ENCODE measurements at regions of chr2 and their contacts with region 1.

Region 1: DNA sequence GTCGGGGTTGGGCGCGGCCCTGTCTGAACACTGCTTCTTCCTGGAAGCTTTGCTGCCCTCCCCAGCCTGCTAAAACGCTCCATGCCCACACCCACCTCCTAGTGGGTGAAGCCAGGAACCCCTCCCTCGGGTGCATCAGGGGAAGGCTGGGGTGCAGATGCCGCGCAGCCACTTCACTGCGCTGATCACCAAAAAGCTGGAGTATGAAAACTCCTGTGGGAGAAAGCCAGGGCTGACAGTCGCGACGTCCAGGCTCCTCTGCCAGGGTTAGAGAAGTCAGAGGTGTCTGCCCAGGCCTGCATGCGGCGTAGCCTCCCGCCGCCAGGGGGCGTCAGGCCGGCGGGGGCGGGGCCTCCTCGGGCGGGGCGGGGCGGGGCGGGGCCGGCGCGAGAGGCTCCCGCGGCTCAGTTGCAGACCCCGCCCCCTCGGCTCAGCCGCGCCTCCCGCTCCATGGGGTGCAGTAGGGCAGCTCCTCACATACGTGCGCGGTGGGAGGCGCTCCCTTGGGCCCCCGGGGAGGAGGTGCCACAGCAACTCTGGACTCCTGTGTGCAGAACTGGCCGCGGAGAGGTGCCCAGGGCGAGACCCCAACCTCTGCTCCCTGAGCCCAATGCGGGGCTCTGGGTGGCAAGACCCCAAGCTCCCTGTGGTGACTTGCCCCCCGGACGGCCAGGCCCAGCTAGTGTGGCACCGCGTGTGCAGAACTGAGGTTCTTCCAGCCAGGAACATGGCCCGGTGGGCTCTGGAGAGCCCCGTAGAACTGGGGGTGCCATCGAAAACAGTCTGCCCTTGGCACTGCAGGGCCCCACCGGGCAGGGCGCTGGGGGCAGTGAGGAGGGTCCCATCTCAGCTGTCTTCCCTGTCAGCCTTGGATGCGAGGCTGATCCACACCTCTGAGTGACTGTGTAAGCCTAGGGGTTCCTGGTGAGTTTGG is 1.8 kb upstream of the RNPEPL1 start:
- DNase-seq: peak; percentile 98
- ATAC-seq: peak; percentile 73
- H3K4me3 Mint-ChIP-seq: peak overlapping the region; percentile 98
- H3K27ac Mint-ChIP-seq: peak overlapping the region; percentile 99
- H3K4me1 Mint-ChIP-seq: peaks cover 60% of the 10 kb centered on the region
- H3K27me3 Mint-ChIP-seq: no peaks in the 10 kb centered on the region
- CTCF ChIP-seq: peak; percentile 99

Region 2: GRCh38 chr2:240513549-240514287 is 52.8 kb before region 1 on chr2:
- CTCF ChIA-PET with region 1: interaction called, 37 read pairs
- POLR2A ChIA-PET with region 1: interaction called, 4 read pairs
- intact Hi-C with region 1: loop called (anchors 5 kb)
- DNase-seq: peak; percentile 95
- ATAC-seq: peak; percentile 100
- H3K4me3 Mint-ChIP-seq: no peak overlapping the region
- H3K27ac Mint-ChIP-seq: peak overlapping the region; percentile 47
- H3K4me1 Mint-ChIP-seq: peaks cover 13% of the 10 kb centered on the region
- H3K27me3 Mint-ChIP-seq: no peaks in the 10 kb centered on the region
- CTCF ChIP-seq: peak; percentile 93

Region 3: DNA sequence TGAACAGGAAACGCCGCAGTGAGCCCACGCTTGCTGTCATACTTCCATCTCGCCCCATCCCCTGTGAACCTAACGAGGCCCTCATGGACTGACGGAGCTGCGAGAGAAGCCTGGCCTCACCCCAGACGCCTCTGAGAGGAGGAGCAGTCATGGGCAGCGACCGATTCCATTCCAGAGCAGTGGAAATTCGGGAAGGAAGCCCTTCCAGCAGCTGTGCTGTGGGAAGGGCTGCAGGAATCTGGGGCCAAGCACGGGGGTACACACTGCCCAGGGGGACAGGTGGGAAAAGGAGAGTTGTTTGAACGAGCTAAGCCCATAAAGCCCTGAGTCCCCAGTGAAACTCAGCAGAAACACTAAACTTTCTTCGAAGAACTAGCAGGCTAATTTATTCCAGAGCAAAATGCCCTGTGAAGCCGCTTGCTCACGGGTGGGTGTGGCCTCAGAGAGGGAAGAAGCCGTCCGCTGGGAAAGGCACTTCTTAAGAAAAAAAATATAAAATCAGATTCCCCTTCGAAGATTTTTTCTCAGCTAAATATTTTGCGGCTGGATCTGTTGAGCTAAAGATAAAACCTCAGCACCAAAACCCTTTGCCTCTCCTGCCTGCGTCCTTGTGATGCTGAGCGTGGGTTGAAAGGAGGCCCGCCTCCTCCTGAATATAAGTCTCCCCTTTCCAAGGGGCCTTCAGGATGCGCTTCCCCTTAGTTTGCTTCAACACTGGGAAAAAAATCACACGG is 46.9 kb before region 1 on chr2:
- CTCF ChIA-PET with region 1: interaction called, 37 read pairs
- POLR2A ChIA-PET with region 1: no interaction called
- intact Hi-C with region 1: loop called (anchors 5 kb)
- DNase-seq: no peak
- ATAC-seq: no peak
- H3K4me3 Mint-ChIP-seq: no peak overlapping the region
- H3K27ac Mint-ChIP-seq: no peak overlapping the region
- H3K4me1 Mint-ChIP-seq: peaks cover 5% of the 10 kb centered on the region
- H3K27me3 Mint-ChIP-seq: peaks cover 3% of the 10 kb centered on the region
- CTCF ChIP-seq: no peak

Region 4: DNA sequence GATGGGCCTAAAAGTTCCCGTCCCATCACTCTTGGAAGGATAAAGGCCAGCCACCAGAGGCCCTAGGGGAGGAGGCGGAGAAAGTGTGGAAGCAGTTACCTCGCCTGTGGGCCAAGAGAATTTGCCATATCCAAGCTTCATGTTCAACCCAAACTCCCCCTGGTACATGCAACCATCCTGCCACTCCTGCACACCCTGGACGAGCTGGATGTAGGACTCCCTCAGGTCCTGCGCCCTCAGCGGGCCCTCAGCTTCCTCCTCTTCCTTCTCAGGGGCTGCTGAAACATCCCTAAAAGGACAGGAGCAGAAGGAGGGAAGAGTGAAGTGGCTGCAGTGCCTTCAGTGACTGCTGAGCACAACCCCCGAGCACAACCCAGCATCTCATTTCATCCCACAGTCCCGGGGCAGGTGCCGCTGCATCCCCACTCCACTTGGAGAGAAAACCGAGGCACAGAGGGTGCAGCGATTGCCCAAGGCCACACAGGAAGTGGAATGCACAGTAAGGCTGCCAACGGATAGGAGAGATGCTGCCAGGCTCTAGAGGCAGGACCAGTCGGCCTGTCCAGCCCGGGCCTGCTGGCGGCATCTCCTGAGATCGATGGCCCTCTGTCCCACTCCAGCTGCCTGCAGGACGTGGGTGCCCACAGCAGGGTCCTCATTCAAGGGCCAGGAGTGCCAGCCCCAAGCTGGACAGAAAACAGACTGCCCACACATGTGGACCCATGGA is 11.5 kb before region 1 on chr2:
- CTCF ChIA-PET with region 1: interaction called, 15 read pairs
- POLR2A ChIA-PET with region 1: no interaction called
- intact Hi-C with region 1: no loop called
- DNase-seq: no peak
- ATAC-seq: no peak
- H3K4me3 Mint-ChIP-seq: no peak overlapping the region
- H3K27ac Mint-ChIP-seq: no peak overlapping the region
- H3K4me1 Mint-ChIP-seq: peaks cover 37% of the 10 kb centered on the region
- H3K27me3 Mint-ChIP-seq: no peaks in the 10 kb centered on the region
- CTCF ChIP-seq: no peak

Region 5: GRCh38 chr2:240579771-240580614 is 13.5 kb after region 1 on chr2:
- CTCF ChIA-PET with region 1: interaction called, 50 read pairs
- POLR2A ChIA-PET with region 1: interaction called, 118 read pairs
- intact Hi-C with region 1: no loop called
- DNase-seq: peak; percentile 83
- ATAC-seq: peak; percentile 82
- H3K4me3 Mint-ChIP-seq: no peak overlapping the region
- H3K27ac Mint-ChIP-seq: peak overlapping the region; percentile 82
- H3K4me1 Mint-ChIP-seq: peaks cover 38% of the 10 kb centered on the region
- H3K27me3 Mint-ChIP-seq: no peaks in the 10 kb centered on the region
- CTCF ChIP-seq: peak; percentile 62

Region 6: GRCh38 chr2:240586198-240586918 is 19.9 kb after region 1 on chr2 and contains the start of gene CAPN10:
- CTCF ChIA-PET with region 1: interaction called, 50 read pairs
- POLR2A ChIA-PET with region 1: interaction called, 118 read pairs
- intact Hi-C with region 1: no loop called
- DNase-seq: peak; percentile 98
- ATAC-seq: peak; percentile 88
- H3K4me3 Mint-ChIP-seq: peak within 1 kb of the TSS; percentile 95
- H3K27ac Mint-ChIP-seq: peak within 1 kb of the TSS; percentile 92
- H3K4me1 Mint-ChIP-seq: peaks cover 36% of the 10 kb centered on the region
- H3K27me3 Mint-ChIP-seq: no peaks in the 10 kb centered on the region
- CTCF ChIP-seq: no peak
- total RNA-seq, gene CAPN10: 26.8 to 29.1 TPM

Region 7: GRCh38 chr2:240624950-240625621 is 58.6 kb after region 1 on chr2 and contains the start of gene GPR35:
- CTCF ChIA-PET with region 1: interaction called, 20 read pairs
- POLR2A ChIA-PET with region 1: interaction called, 25 read pairs
- intact Hi-C with region 1: loop called (anchors 5 kb)
- DNase-seq: peak; percentile 93
- ATAC-seq: peak; percentile 55
- H3K4me3 Mint-ChIP-seq: peak within 1 kb of the TSS; percentile 75
- H3K27ac Mint-ChIP-seq: peak within 1 kb of the TSS; percentile 89
- H3K4me1 Mint-ChIP-seq: peaks cover 58% of the 10 kb centered on the region
- H3K27me3 Mint-ChIP-seq: no peaks in the 10 kb centered on the region
- CTCF ChIP-seq: no peak
- total RNA-seq, gene GPR35: 14.4 to 14.6 TPM

Measured in activated CD8-positive, alpha-beta T cell treated with anti-CD3 and anti-CD28 coated beads for 36 hours (primary cell).